ENCODE measurements at regions of chr1 and their contacts with region 1.

Region 1: GRCh38 chr1:214683596-214683995 is 80.6 kb downstream of the CENPF start:
- DNase-seq: no peak
- H3K4me3 ChIP-seq: no peak overlapping the region
- H3K27ac ChIP-seq: no peak overlapping the region
- H3K4me1 ChIP-seq: no peaks in the 10 kb centered on the region
- H3K27me3 ChIP-seq: no peaks in the 10 kb centered on the region
- CTCF ChIP-seq: no peak
- POLR2A ChIP-seq: no peak

Region 2: GRCh38 chr1:214135886-214136285 is 547.7 kb before region 1 on chr1:
- CTCF ChIA-PET with region 1: no interaction called
- POLR2A ChIA-PET with region 1: no interaction called
- dilution Hi-C with region 1: no loop called
- intact Hi-C with region 1: loop called (anchors 5 kb)
- DNase-seq: no peak
- H3K4me3 ChIP-seq: no peak overlapping the region
- H3K27ac ChIP-seq: no peak overlapping the region
- H3K4me1 ChIP-seq: no peaks in the 10 kb centered on the region
- H3K27me3 ChIP-seq: no peaks in the 10 kb centered on the region
- CTCF ChIP-seq: no peak
- POLR2A ChIP-seq: no peak

Region 3: GRCh38 chr1:214719207-214719606 is 35.6 kb after region 1 on chr1:
- CTCF ChIA-PET with region 1: no interaction called
- POLR2A ChIA-PET with region 1: no interaction called
- dilution Hi-C with region 1: no loop called
- intact Hi-C with region 1: no loop called
- DNase-seq: no peak
- H3K4me3 ChIP-seq: no peak overlapping the region
- H3K27ac ChIP-seq: no peak overlapping the region
- H3K4me1 ChIP-seq: no peaks in the 10 kb centered on the region
- H3K27me3 ChIP-seq: no peaks in the 10 kb centered on the region
- CTCF ChIP-seq: no peak
- POLR2A ChIP-seq: no peak